Activated T-helper 1 cell treated with anti-CD3 and anti-CD28 coated beads, Interleukin-12 subunit alpha, Interleukin-12 subunit beta, Interleukin-2, Interleukin-4 antibody, amounts not matched to agents 30 ng/mL and 10 ng/mL and 1 ng/mL, durations not matched to agents 14 hours and 24 hours and 36 hours (primary cell): ENCODE measurements at regions of chr4 and their contacts with region 1.

Region 1: GRCh38 chr4:1958276-1959103 is 50.3 kb downstream of the NELFA start:
- DNase-seq: no peak
- H3K4me3 Mint-ChIP-seq: no peak overlapping the region
- H3K27ac Mint-ChIP-seq: no peak overlapping the region
- H3K4me1 Mint-ChIP-seq: no peaks in the 10 kb centered on the region
- H3K27me3 Mint-ChIP-seq: no peaks in the 10 kb centered on the region

Region 2: DNA sequence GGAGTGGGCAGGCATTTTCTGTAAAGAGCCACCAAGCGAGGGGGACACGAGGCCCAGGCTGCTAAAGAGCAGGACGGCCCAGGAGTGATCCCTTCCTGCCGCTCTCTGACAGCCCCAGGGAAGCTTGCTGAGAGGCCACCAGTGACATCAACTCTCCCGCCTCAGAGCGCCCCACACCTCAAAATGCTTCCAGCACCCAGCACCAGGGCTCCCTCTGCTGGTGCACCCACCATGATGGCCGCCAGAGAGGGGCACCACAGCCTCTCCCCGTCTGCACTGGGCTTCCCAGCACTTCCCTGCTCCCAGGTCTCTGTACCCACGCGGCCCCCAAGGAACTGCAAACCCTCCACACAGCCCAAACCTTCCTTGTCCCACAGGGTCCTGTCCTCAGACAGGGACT is 1066.7 kb before region 1 on chr4:
- intact Hi-C with region 1: no loop called
- DNase-seq: no peak
- H3K4me3 Mint-ChIP-seq: no peak overlapping the region
- H3K27ac Mint-ChIP-seq: no peak overlapping the region
- H3K4me1 Mint-ChIP-seq: no peaks in the 10 kb centered on the region
- H3K27me3 Mint-ChIP-seq: no peaks in the 10 kb centered on the region

Region 3: GRCh38 chr4:1922821-1923220 is 35.7 kb before region 1 on chr4:
- intact Hi-C with region 1: loop called (anchors 5 kb)
- DNase-seq: no peak
- H3K4me3 Mint-ChIP-seq: no peak overlapping the region
- H3K27ac Mint-ChIP-seq: peak overlapping the region; percentile 26
- H3K4me1 Mint-ChIP-seq: no peaks in the 10 kb centered on the region
- H3K27me3 Mint-ChIP-seq: no peaks in the 10 kb centered on the region